Left cardiac atrium (tissue), 4 donors: ENCODE measurements at regions of chr3 and their contacts with region 1.

Region 1: DNA sequence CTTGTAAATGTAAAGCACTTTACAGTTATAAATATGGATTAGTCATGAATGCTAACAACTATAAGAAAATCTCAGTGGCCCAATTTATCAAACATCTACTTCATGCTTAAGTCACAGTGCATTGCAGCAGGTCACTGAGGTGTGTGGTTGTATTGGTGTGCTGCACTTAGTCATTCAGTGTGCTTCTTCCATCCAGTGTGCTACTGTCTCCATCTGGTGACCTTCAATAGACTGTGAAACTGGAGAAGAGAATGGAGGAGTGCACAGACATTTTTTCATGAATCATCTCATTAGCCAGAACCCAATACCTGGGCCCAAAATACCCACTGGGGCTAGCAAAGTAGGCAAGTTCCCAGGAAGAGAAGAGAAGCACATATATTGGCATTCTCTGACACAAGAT is 199.6 kb downstream of the SHOX2 start:
- DNase-seq: no peak
- ATAC-seq: no peak

Region 2: GRCh38 chr3:157618075-157618760 is 288.4 kb before region 1 on chr3:
- intact Hi-C with region 1: loop called in 1 of 2 experiments (anchors 5 kb)
- DNase-seq: no peak
- ATAC-seq: peak; percentile 26 to 34

Region 3: GRCh38 chr3:157652366-157652765 is 254.3 kb before region 1 on chr3:
- intact Hi-C with region 1: no loop called
- DNase-seq: no peak
- ATAC-seq: no peak